Breast epithelium (tissue), 4 donors: ENCODE measurements at regions of chr16 and their contacts with region 1.

Region 1: DNA sequence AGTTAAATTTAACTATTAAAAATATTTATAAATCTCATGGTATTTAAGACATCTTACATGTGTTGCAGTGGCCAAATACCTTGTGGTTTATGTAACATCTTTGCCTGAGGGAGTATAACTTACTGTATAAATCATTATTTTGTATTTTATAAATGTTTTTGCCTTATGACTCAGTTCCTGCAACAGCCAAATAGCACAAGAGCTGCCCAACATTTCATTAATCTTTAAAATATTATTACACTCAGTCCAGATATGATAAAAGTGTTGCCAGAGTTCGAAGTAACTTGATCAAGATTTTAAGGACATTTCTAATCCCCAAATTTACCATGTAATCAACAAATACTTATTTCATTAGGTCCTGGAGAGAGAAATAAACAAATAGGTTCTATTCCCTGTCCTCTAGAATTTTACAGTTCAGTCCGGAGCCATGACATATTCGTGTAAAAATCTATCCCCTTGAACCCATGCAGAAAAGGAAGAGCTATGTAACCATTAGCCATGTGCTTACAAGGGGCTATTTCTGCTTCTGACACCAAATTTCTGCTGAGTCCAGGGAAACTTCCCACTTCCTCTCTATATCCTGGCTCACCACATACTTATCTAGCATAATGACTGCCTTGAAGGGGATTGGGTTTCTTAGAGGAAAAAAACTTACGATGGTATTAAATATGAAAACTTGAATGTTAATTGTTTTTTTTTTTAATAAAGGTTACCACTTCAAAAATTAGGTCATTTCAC is 44.0 kb downstream of the IRX6 start:
- DNase-seq: no peak
- H3K4me3 ChIP-seq: no peak overlapping the region
- H3K27ac ChIP-seq: no peak overlapping the region
- H3K4me1 ChIP-seq: no peaks in the 10 kb centered on the region
- H3K27me3 ChIP-seq: no peaks in the 10 kb centered on the region
- CTCF ChIP-seq: no peak
- POLR2A ChIP-seq: no peak

Region 2: DNA sequence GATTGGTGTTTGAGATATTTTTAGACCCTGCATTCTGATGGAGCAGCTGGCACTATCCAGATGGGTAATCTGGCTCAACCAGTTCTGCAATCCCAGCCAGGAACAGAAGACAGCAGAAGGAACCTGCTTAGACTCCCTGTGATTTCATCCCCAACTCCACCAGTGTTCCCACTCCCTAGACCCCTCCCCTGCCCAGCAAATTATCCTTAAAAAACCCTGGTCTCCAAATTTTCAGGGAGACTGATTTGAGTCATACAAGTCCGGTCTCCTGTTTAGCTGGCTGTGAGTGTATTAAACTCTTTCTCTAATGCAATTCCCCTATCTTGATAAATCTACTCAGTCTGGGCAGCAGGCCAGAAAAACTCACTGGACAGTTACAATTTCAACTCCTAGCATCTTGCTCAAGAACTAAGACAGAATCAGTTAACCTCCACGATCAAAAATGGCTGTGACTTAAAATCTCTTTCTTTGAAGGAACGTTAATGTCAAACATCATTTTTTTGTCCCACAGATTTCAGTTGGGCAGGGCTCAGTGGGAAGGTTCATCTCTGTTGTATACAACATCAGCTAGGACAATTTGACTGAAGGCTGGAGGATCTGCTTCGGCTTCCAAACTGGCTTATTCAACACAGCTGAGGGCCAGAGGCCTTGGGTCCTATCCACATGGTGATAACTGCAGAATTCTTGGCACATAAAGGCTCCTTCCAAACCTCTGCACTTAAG is 1938.7 kb before region 1 on chr16:
- intact Hi-C with region 1: loop called (anchors 5 kb)
- DNase-seq: no peak
- H3K4me3 ChIP-seq: no peak overlapping the region
- H3K27ac ChIP-seq: peak overlapping the region; percentile 22 to 30
- H3K4me1 ChIP-seq: no peaks in the 10 kb centered on the region
- H3K27me3 ChIP-seq: no peaks in the 10 kb centered on the region
- CTCF ChIP-seq: no peak
- POLR2A ChIP-seq: no peak